ENCODE measurements at regions of chr10 and their contacts with region 1.

Region 1: GRCh38 chr10:17290226-17290625 is 62.2 kb downstream of the VIM start:
- DNase-seq: peak; percentile 55
- H3K4me3 Mint-ChIP-seq: no peak overlapping the region
- H3K27ac Mint-ChIP-seq: peak overlapping the region; percentile 68
- H3K4me1 Mint-ChIP-seq: peaks cover 12% of the 10 kb centered on the region
- H3K27me3 Mint-ChIP-seq: peaks cover 18% of the 10 kb centered on the region

Region 2: GRCh38 chr10:16968416-16969041 is 321.7 kb before region 1 on chr10:
- CTCF ChIA-PET with region 1: no interaction called
- intact Hi-C with region 1: no loop called
- DNase-seq: no peak
- H3K4me3 Mint-ChIP-seq: no peak overlapping the region
- H3K27ac Mint-ChIP-seq: no peak overlapping the region
- H3K4me1 Mint-ChIP-seq: peaks cover 14% of the 10 kb centered on the region
- H3K27me3 Mint-ChIP-seq: no peaks in the 10 kb centered on the region

Region 3: DNA sequence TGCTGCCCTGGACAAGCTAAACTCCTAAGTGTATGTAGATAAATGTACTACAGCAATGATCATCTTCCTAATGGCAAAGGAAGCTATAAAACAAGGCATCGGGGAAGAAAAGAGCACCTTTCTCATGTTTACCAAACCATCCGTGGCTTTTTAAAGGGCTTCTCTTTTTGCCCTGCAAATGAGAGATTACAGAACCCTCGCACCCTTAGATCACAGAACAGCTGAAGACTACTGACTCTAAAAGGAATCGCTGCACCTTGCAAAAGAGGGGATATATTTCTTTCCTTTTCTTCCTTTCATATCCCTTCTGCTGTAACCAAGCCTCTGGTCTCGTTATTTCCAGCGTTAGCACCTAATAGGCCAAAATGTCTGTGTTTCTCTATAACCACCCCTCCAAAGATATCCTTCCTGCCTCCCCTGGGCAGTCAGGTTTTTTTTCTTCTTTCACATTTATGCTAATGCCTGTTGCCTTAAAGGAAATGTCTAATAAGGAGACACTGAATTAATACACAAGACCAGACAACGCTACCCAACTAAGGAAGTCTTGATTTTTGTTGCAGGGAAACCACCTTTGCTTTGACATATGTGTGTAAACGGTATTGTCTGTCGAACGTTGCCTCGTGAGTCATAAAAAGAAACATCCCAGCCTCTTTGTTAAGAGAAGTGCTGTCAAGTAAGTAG is 153.6 kb after region 1 on chr10:
- CTCF ChIA-PET with region 1: no interaction called
- intact Hi-C with region 1: loop called (anchors 1 kb)
- DNase-seq: peak; percentile 61
- H3K4me3 Mint-ChIP-seq: peak overlapping the region; percentile 46
- H3K27ac Mint-ChIP-seq: peak overlapping the region; percentile 28
- H3K4me1 Mint-ChIP-seq: peaks cover 16% of the 10 kb centered on the region
- H3K27me3 Mint-ChIP-seq: peaks cover 3% of the 10 kb centered on the region

Region 4: DNA sequence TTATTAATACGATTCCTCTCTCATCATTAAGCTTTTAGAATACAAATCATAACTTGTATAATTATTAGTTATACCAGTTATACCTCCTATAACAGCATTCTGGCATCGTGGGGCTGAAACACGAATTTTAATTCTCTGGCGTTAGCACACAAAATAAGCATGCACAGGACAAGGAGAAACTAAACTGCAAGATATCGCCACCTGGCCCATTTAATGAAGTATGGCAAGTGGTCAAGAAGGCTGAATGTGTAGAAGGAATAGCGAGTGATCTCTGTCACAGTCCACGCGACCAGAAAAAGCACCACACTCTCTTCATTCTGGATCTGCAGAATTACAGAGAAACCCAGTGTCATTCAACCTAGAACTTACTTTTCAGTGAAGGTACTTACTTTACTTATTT is 308.9 kb after region 1 on chr10:
- CTCF ChIA-PET with region 1: no interaction called
- intact Hi-C with region 1: loop called (anchors 10 kb)
- DNase-seq: no peak
- H3K4me3 Mint-ChIP-seq: no peak overlapping the region
- H3K27ac Mint-ChIP-seq: no peak overlapping the region
- H3K4me1 Mint-ChIP-seq: no peaks in the 10 kb centered on the region
- H3K27me3 Mint-ChIP-seq: no peaks in the 10 kb centered on the region

Region 5: DNA sequence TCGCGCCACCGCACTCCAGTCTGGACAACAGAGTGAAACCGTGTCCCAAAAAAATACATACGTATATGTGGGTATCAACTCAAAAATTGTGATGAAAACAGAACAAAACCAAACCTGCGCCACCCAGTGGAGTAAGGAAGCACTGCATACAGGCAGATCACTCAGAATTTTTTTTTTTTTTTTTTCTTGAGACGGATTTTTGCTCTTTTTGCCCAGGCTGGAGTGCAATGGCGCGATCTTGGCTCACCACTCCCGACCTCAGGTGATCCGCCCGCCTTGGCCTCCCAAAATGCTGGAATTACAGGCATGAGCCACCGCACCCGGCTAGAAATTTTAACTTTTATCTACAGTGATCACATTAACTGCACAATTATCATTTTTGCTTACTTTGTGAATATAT is 452.7 kb after region 1 on chr10:
- CTCF ChIA-PET with region 1: no interaction called
- intact Hi-C with region 1: loop called (anchors 2 kb)
- DNase-seq: peak; percentile 83
- H3K4me3 Mint-ChIP-seq: no peak overlapping the region
- H3K27ac Mint-ChIP-seq: no peak overlapping the region
- H3K4me1 Mint-ChIP-seq: peaks cover 8% of the 10 kb centered on the region
- H3K27me3 Mint-ChIP-seq: no peaks in the 10 kb centered on the region